Gastrocnemius medialis (tissue), 4 donors: ENCODE measurements at regions of chr10 and their contacts with region 1.

Region 1: GRCh38 chr10:17782921-17783665 is 26.1 kb upstream of the MRC1 start:
- DNase-seq: peak; percentile 21 to 82
- ATAC-seq: peak; percentile 65 to 89
- H3K4me3 ChIP-seq: peak overlapping the region in 3 of 4 donors; percentile 9 to 30 (median 19)
- H3K27ac ChIP-seq: peak overlapping the region; percentile 51 to 82 (median 75)
- H3K4me1 ChIP-seq: peaks cover 23 to 45% of the 10 kb centered on the region in 2 donors
- H3K27me3 ChIP-seq: no peaks in the 10 kb centered on the region
- CTCF ChIP-seq: no peak
- POLR2A ChIP-seq: no peak

Region 2: DNA sequence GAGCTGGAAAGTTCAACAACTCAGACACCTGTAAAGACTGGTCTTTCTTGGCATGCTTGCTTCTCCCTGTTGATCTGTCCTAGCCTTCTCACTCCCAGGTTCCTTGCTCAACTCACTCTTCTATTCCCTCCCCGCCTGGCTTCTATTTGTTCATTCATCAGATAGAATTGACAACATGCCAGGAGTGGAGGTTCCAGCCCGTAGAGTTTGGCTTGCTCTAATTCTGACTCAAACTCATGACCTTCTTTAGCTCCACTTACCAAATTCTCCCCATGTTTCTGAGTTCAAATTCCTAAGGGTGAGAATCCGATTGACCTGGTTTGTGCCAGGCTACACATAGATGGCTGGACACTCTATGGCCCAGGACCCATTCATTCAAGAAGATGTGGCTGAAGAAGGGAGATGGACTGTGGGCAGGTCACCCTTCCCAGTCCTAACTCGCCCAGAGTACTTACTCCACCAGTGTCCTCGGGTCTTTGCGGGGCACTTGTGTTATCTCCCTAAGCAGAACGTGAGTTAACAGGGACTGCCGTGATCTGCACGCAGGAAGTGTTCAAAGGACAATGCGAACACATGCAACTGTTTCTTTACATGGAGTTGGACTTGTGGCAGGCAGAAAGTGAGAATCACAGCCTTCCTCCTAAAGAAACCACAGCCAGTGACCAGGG is 35.1 kb before region 1 on chr10:
- in situ Hi-C with region 1: no loop called
- intact Hi-C with region 1: loop called (anchors 5 kb)
- DNase-seq: no peak
- ATAC-seq: no peak
- H3K4me3 ChIP-seq: no peak overlapping the region
- H3K27ac ChIP-seq: no peak overlapping the region
- H3K4me1 ChIP-seq: peaks cover 11 to 16% of the 10 kb centered on the region in 2 donors
- H3K27me3 ChIP-seq: no peaks in the 10 kb centered on the region
- CTCF ChIP-seq: no peak
- POLR2A ChIP-seq: no peak